ENCODE measurements at regions of chr4 and their contacts with region 1.

Region 1: DNA sequence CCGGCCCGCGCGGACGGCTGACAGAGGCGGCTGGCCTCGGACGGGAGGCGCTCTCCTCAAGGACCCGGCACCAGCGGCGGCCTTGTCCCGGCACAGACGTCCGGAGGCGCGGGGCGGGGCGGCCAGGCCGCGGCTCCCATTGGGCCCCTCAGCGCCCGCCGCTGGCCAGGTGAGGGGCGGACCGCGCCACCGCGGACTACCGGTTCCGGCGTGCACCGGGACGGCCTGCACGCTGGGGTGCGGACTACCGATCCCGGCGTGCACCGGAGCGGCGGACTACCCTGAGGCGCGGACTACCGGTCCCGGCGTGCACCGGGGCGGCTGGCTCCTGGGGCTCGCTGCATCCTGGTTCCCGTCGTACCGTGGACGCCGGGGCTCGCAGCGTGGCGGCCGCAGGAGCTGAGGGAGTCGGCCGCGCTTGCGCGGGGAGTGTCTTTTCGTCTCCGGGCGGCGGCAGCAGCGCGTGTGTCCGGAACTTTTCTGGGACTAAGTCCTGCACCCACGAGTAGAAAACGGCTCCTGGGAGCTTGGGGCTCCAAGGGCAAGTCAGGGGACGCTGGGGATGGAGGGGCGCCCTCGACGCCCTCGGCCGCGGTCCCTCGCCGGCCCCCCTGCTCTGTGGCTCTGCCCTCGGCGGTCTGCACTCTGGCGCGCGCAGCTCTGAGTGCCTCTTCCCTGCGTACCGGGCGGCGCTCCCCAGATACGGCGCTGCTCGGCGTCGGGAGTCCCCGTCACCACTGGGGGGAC is at the start of gene LETM1:
- DNase-seq: peak; percentile 90
- ATAC-seq: peak; percentile 95
- H3K4me3 Mint-ChIP-seq: peak within 1 kb of the TSS; percentile 83
- H3K27ac Mint-ChIP-seq: peak within 1 kb of the TSS; percentile 75
- H3K4me1 Mint-ChIP-seq: peaks cover 23% of the 10 kb centered on the region
- H3K27me3 Mint-ChIP-seq: no peaks in the 10 kb centered on the region
- CTCF ChIP-seq: no peak
- total RNA-seq, gene LETM1: 52.5 and 60.3 TPM in 2 replicates

Region 2: GRCh38 chr4:1712216-1713002 is 143.8 kb before region 1 on chr4 and contains the start of gene SLBP:
- CTCF ChIA-PET with region 1: no interaction called
- POLR2A ChIA-PET with region 1: interaction called, 4 read pairs
- intact Hi-C with region 1: loop called (anchors 1 kb)
- DNase-seq: peak; percentile 97
- ATAC-seq: peak; percentile 87
- H3K4me3 Mint-ChIP-seq: peak within 1 kb of the TSS; percentile 94
- H3K27ac Mint-ChIP-seq: peak within 1 kb of the TSS; percentile 93
- H3K4me1 Mint-ChIP-seq: peaks cover 73% of the 10 kb centered on the region
- H3K27me3 Mint-ChIP-seq: no peaks in the 10 kb centered on the region
- CTCF ChIP-seq: no peak
- total RNA-seq, gene SLBP: 34.0 and 37.8 TPM in 2 replicates

Region 3: DNA sequence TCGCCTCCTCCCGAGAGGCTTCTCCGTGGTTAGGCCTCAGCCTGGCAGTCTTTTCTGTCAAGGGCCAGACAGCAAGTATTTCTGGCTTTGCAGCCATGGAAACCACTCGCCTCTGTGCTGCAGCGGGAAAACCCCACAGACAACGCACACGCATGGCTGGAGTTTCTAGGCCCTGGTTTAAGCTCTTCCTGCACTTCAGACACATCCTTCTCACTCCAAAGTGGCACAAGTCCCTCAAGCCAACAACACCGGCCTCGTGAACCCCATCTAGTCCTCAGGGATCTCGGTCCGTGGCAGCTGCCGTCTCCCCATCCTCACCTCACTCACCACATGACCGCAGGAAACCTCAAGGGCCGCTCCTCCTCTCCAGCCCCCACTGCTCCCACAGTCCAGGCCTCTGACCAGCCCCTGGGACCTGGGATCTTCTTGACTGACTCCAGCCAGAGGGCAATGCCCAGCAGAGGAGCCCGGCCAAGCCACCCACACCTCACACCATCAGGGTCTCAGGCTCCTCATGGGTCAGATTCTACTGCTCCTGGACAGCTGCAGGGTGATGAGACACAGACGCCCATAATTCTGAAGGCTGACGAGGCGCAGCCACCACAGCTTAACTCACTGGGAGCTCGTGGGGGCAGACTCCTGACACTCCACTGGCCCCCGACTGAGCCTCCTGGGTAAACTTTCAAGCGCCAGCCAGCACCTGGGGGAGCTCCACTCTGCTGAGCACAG is 22.0 kb before region 1 on chr4:
- CTCF ChIA-PET with region 1: no interaction called
- POLR2A ChIA-PET with region 1: interaction called, 5 read pairs
- intact Hi-C with region 1: loop called (anchors 1 kb)
- DNase-seq: peak; percentile 54
- ATAC-seq: peak; percentile 90
- H3K4me3 Mint-ChIP-seq: peak overlapping the region; percentile 63
- H3K27ac Mint-ChIP-seq: peak overlapping the region; percentile 92
- H3K4me1 Mint-ChIP-seq: peaks cover 34% of the 10 kb centered on the region
- H3K27me3 Mint-ChIP-seq: no peaks in the 10 kb centered on the region
- CTCF ChIP-seq: no peak

Region 4: GRCh38 chr4:1899149-1900086 is 43.2 kb after region 1 on chr4:
- CTCF ChIA-PET with region 1: interaction called, 4 read pairs
- POLR2A ChIA-PET with region 1: no interaction called
- intact Hi-C with region 1: loop called (anchors 1 kb)
- DNase-seq: peak; percentile 44
- ATAC-seq: peak; percentile 95
- H3K4me3 Mint-ChIP-seq: no peak overlapping the region
- H3K27ac Mint-ChIP-seq: no peak overlapping the region
- H3K4me1 Mint-ChIP-seq: peaks cover 6% of the 10 kb centered on the region
- H3K27me3 Mint-ChIP-seq: no peaks in the 10 kb centered on the region
- CTCF ChIP-seq: peak; percentile 67

Region 5: GRCh38 chr4:1948892-1949436 is 92.7 kb after region 1 on chr4:
- CTCF ChIA-PET with region 1: no interaction called
- POLR2A ChIA-PET with region 1: no interaction called
- intact Hi-C with region 1: no loop called
- DNase-seq: no peak
- ATAC-seq: no peak
- H3K4me3 Mint-ChIP-seq: no peak overlapping the region
- H3K27ac Mint-ChIP-seq: no peak overlapping the region
- H3K4me1 Mint-ChIP-seq: no peaks in the 10 kb centered on the region
- H3K27me3 Mint-ChIP-seq: no peaks in the 10 kb centered on the region
- CTCF ChIP-seq: no peak

Region 6: DNA sequence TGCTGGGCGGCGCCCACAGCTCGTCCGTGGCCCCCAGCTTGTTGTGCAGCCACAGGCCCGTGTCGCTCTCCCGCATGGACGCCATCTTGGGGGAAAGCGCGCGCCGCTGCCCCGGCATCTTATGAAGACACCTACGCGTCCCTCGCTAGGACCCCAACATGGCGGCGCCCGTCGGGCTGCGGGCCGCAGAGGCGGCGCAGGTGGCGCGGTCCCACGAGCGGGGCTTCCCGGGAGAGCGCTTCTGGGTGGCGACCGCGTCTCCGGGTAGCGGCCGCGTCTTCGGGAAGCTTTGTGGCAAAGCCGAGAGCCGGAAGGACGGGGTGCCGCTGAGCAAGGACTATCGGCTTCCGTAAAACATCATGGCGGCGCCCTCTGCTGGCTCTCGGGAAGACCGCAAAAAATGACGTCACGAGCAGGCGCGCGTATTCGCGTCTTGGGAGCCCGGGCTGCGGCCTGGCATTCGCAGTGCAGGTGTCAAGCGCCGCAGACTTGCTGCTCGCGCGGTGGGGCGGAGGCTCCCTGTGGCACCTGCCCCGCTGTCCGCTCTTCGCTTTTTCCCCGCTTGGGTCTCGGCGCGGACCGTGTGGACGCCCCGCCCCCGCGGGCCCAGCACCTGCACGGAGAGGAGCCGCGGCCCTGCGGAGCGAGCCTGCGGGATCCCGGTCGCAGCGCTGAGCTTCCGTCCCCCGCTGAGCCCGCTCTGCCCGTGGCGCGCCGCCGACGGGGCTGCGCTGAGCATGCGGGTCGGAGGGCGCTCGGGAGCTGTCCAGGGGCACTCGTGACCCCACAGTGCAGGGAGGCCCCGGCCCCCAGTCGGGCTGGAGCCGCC is 152.9 kb after region 1 on chr4 and contains the start of gene NELFA:
- CTCF ChIA-PET with region 1: no interaction called
- POLR2A ChIA-PET with region 1: no interaction called
- intact Hi-C with region 1: loop called (anchors 5 kb)
- DNase-seq: peak; percentile 93
- ATAC-seq: peak; percentile 80
- H3K4me3 Mint-ChIP-seq: peak within 1 kb of the TSS; percentile 90
- H3K27ac Mint-ChIP-seq: peak within 1 kb of the TSS; percentile 91
- H3K4me1 Mint-ChIP-seq: peaks cover 32% of the 10 kb centered on the region
- H3K27me3 Mint-ChIP-seq: peaks cover 4% of the 10 kb centered on the region
- CTCF ChIP-seq: no peak
- total RNA-seq, gene NELFA: 44.7 and 49.9 TPM in 2 replicates

Region 7: DNA sequence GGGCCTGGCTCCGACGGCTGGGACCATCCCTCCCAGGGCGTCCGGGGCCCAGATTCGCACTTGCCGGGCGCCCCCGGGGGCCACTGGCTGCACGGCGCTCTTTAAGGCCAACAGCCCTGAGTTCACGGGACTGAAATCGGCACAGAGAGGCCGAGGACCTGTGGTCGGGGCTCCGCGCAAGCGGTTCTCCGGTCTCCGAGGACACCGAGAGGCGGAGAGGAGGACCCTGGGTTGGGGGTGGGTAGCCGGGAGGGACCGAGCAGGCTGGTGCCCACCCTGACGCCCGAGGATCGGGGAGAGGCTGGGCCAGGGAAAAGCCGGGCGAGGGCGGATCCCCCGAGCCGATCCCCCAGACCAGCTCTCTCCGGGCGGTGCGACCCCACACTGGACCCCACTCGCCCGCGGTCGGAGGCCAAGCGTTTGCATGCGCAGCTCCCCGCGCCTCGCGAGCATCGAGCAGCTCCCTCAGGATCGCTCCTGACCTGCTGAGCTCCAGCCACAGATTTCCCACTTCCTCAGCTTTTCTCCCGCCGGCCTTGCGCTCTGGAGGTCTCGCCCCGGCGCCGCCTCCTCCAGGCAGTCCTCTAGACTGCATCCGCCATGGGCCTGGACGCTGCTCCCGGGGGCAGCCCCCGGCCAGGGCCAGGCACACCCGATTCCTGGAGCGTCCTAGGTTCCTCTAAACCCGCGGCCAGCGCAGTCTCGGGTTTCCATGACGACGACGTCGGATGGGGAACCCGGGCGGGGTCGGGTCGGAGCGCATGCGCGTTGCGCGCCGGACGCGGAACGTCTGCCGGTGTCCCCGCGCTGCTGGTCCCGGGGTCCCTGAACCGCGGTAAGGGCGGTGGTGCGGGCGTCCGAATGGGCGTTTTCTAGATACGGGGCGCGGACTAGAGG is 185.3 kb after region 1 on chr4:
- CTCF ChIA-PET with region 1: no interaction called
- POLR2A ChIA-PET with region 1: no interaction called
- intact Hi-C with region 1: loop called (anchors 1 kb)
- DNase-seq: peak; percentile 80
- ATAC-seq: peak; percentile 76
- H3K4me3 Mint-ChIP-seq: peak overlapping the region; percentile 84
- H3K27ac Mint-ChIP-seq: peak overlapping the region; percentile 12
- H3K4me1 Mint-ChIP-seq: peaks cover 9% of the 10 kb centered on the region
- H3K27me3 Mint-ChIP-seq: peaks cover 20% of the 10 kb centered on the region
- CTCF ChIP-seq: no peak

Region 8: GRCh38 chr4:2071912-2072867 is 216.0 kb after region 1 on chr4:
- CTCF ChIA-PET with region 1: no interaction called
- POLR2A ChIA-PET with region 1: no interaction called
- intact Hi-C with region 1: no loop called
- DNase-seq: no peak
- ATAC-seq: no peak
- H3K4me3 Mint-ChIP-seq: no peak overlapping the region
- H3K27ac Mint-ChIP-seq: no peak overlapping the region
- H3K4me1 Mint-ChIP-seq: no peaks in the 10 kb centered on the region
- H3K27me3 Mint-ChIP-seq: no peaks in the 10 kb centered on the region
- CTCF ChIP-seq: no peak

Measured in activated B cell treated with CpG ODN at 0.5 μM for 24 hours (primary cell).